K562 (cell line): ENCODE measurements at regions of chr18 and their contacts with region 1.

Region 1: DNA sequence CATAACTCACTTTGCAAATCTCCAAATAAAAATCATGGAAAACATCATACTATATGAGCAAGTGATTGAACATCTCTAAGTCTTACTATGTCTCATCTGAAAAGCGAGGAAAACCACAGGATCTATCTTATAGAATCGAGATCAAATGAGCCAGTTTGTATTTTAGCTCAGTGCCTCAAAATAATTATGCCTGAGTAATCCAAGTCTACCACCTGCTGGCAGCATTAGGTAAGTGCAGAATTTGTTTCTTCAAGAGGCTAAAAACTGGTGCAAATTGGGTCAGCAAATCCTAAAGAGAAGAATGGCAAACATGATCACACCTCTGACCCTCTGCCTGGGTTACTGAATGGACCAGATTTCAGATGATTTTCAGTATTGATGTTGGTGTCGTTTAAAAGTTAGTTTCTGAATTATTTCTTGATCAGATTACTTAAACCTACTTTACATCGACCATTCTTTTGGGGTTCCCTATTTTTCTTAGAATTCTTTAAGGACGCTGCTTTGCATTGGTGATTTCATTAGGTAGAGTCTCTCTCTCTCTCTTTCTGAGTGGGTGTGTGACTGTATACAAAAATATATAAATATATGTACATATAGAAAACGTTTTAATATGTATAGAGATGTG is 12.7 kb upstream of the FHOD3 start:
- DNase-seq: peak; percentile 51 to 78 (median 54)
- ATAC-seq: peak; percentile 72
- H3K4me3 ChIP-seq: no peak overlapping the region
- H3K27ac ChIP-seq: no peak overlapping the region
- H3K4me1 ChIP-seq: no peaks in the 10 kb centered on the region
- H3K27me3 ChIP-seq: peaks cover 3 to 17% of the 10 kb centered on the region in 2 experiments; a peak in 3 of 5 replicates
- CTCF ChIP-seq: peak; percentile 84 to 98 (median 84)
- EP300 ChIP-seq: no peak
- POLR2A ChIP-seq: no peak
- RAD21 ChIP-seq: peak; percentile 98 to 100

Region 2: DNA sequence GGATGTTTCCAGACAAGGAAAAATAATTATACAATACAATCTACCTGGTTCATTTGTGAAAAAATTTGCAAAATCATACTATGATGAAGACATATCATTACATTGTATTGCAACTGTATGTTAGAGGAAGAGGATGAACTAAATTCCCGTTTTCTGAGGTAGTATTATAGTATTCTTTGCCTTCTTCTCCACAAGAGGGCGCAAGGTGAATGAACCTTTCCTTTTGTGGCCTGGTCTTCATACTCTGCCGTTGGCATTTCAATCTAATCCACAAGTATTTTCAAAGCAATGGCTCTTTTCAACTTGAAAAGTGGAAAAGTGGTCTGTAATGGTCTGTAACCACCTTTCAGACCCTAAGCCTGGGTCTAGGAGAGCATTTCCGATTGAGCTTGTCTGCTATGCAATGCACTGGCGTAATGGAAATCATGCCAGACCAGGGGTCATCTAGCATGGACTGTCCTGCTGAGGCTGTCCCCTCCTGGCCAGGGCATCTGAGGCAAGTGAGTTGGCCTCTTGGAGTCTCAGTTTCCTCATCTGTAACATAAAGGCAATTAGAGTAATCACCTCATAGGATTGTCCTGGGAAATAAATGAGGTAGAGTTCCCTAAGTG is 876.8 kb before region 1 on chr18:
- CTCF ChIA-PET with region 1: no interaction called
- POLR2A ChIA-PET with region 1: no interaction called
- in situ Hi-C with region 1: no loop called
- intact Hi-C with region 1: loop called (anchors 10 kb)
- DNase-seq: peak; percentile 61 to 85 (median 65)
- ATAC-seq: peak; percentile 90
- H3K4me3 ChIP-seq: no peak overlapping the region
- H3K27ac ChIP-seq: no peak overlapping the region
- H3K4me1 ChIP-seq: peaks cover 8 to 14% of the 10 kb centered on the region in 2 experiments; a peak in 3 of 5 replicates
- H3K27me3 ChIP-seq: peaks cover 0 to 9% of the 10 kb centered on the region in 2 experiments; a peak in 1 of 5 replicates
- CTCF ChIP-seq: peak; percentile 69 to 91 (median 84)
- EP300 ChIP-seq: no peak; the same call in 1 of the 2 replicates
- POLR2A ChIP-seq: no peak
- RAD21 ChIP-seq: peak; percentile 87 to 95

Region 3: DNA sequence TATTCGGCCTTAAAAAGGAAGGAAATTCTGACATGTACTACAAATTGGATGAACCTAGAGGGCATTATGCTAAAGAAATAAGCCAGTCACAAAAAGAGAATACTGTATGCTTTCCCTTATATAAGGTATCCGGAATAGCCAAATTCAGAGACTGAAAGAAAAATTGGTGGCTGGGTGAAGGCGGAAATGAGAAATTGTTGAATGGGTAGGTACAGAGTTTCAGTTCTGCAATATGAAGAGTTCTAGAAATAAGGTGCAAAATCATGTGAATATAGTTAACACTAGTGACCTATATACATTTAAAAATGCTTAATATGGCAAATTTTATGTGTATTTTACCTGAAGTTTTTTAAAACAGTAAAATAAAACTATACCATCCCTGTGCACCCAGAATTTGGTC is 269.2 kb before region 1 on chr18:
- CTCF ChIA-PET with region 1: interaction called, 36 read pairs
- POLR2A ChIA-PET with region 1: no interaction called
- in situ Hi-C with region 1: loop called (anchors 5 kb)
- intact Hi-C with region 1: loop called (anchors 1 kb)
- DNase-seq: no peak
- ATAC-seq: no peak
- H3K4me3 ChIP-seq: no peak overlapping the region
- H3K27ac ChIP-seq: no peak overlapping the region
- H3K4me1 ChIP-seq: no peaks in the 10 kb centered on the region
- H3K27me3 ChIP-seq: no peaks in the 10 kb centered on the region
- CTCF ChIP-seq: no peak
- EP300 ChIP-seq: no peak
- POLR2A ChIP-seq: no peak
- RAD21 ChIP-seq: no peak

Region 4: DNA sequence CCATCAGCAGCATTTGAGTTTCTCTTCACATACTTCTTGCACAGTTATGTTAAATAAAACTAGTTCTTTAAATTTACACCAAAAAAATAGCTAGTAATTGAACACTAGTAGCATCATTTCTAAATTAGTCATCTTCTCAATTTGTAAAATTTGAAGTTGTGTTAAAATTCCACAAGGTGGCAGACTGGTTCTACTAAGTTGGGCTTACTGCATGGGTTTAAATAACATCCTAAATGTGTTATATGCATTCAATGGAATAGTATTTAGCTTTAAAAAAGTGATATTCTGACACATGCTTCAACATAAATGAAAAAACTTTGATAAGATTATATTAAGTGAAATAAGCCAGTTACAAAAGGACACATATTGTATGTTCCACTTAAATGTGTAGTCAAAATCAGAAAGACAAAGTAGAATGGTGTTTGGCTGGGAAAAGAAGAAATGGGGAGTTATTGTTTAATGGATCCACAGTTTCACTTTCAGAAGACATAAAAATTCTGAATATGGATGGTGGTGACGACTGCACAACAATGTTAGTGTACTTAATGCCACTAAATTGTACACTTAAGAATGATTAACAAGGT is 188.8 kb before region 1 on chr18:
- CTCF ChIA-PET with region 1: interaction called, 74 read pairs
- POLR2A ChIA-PET with region 1: no interaction called
- in situ Hi-C with region 1: loop called (anchors 5 kb)
- intact Hi-C with region 1: loop called (anchors 1 kb)
- DNase-seq: peak; percentile 41 to 74 (median 52)
- ATAC-seq: peak; percentile 67
- H3K4me3 ChIP-seq: no peak overlapping the region
- H3K27ac ChIP-seq: no peak overlapping the region
- H3K4me1 ChIP-seq: no peaks in the 10 kb centered on the region; a peak in 1 of 5 replicates
- H3K27me3 ChIP-seq: peaks cover 5 to 8% of the 10 kb centered on the region in 2 experiments; a peak in 3 of 5 replicates
- CTCF ChIP-seq: peak; percentile 38 to 88 (median 57); a peak in 3 of 6 replicates
- EP300 ChIP-seq: no peak
- POLR2A ChIP-seq: no peak
- RAD21 ChIP-seq: peak; percentile 89 to 95

Region 5: DNA sequence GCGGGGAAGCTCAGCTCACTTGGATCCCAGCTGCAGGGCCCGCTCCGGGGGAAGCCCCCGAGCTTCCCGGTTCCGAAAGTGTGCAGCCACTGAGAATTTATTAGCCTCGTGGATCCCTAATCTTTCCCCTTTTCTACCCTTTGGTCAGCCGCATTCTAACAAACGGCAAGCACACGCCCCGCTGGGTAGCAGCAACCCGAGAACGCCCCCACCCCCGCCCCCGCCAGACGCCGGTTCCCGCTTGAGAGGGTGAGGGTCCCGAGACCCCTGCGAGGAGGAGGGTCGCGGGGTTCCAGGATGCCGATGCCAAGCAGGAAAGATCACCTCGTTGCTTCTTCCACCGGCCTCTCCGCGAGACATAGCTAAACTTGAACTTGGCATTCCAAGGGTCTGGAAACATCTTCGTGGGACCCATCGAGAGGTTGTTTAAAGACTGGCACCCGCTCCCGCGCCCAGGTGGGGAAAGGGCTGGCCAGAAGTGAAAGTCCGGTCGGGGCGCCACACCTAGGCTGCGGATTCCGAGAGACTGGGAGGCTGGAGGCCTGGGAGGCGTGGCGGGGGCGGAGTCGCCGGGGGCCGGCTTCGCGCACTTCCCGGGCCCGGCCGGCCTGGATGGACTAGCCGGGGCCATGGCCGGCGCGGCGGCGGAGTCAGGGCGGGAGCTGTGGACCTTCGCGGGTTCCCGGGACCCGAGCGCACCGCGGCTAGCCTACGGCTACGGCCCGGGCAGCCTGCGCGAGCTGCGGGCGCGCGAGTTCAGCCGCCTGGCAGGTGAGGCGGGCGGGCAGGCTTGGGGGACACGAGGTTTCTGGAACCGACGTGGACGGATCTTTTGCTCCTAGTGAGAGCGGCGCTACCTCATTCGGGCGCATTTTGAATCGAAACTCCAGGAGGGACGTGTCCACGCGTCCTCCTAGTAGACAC is 97.6 kb before region 1 on chr18 and contains the start of gene MOCOS:
- CTCF ChIA-PET with region 1: no interaction called
- POLR2A ChIA-PET with region 1: no interaction called
- in situ Hi-C with region 1: no loop called
- intact Hi-C with region 1: loop called (anchors 2 kb)
- DNase-seq: peak; percentile 91 to 97 (median 95)
- ATAC-seq: peak; percentile 95
- H3K4me3 ChIP-seq: peak within 1 kb of the TSS; percentile 68
- H3K27ac ChIP-seq: peak within 1 kb of the TSS; percentile 61
- H3K4me1 ChIP-seq: peaks cover 12 to 31% of the 10 kb centered on the region in 2 experiments; a peak in 4 of 5 replicates
- H3K27me3 ChIP-seq: no peaks in the 10 kb centered on the region
- CTCF ChIP-seq: peak in 1 of 3 experiments; percentile 4; a peak in 1 of 6 replicates
- EP300 ChIP-seq: no peak
- POLR2A ChIP-seq: peak; percentile 84
- RAD21 ChIP-seq: no peak
- polyA plus RNA-seq, gene MOCOS: 4.5 to 4.6 TPM

Region 6: DNA sequence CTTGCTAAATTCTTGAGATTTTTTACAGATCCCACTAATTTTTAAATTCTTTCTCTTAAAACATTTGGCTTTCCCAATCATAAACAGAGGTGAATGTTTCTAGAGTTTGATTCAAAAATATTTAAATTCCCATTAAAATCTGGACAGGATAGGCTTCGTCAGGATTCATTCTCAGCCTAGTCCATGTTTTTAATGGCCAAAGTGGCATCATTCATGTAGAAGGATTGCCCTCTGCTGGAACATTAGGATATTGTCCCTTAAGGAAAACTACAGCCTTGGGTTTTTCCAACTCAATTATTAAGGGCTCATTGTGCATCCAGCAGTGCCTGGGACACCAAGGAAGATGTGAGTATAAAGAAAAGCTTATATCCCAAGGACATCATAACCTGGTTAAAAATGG is 472.3 kb after region 1 on chr18:
- CTCF ChIA-PET with region 1: no interaction called
- POLR2A ChIA-PET with region 1: no interaction called
- in situ Hi-C with region 1: no loop called
- intact Hi-C with region 1: loop called (anchors 5 kb)
- DNase-seq: peak; percentile 55 to 59 (median 58)
- ATAC-seq: peak; percentile 76
- H3K4me3 ChIP-seq: no peak overlapping the region
- H3K27ac ChIP-seq: no peak overlapping the region
- H3K4me1 ChIP-seq: peaks cover 4 to 6% of the 10 kb centered on the region in 2 experiments; a peak in 4 of 5 replicates
- H3K27me3 ChIP-seq: peaks cover 29 to 33% of the 10 kb centered on the region in 2 experiments
- CTCF ChIP-seq: peak; percentile 60 to 88 (median 70)
- EP300 ChIP-seq: no peak
- POLR2A ChIP-seq: no peak
- RAD21 ChIP-seq: peak; percentile 76 to 89